ENCODE measurements at regions of chr12 and their contacts with region 1.

Region 1: DNA sequence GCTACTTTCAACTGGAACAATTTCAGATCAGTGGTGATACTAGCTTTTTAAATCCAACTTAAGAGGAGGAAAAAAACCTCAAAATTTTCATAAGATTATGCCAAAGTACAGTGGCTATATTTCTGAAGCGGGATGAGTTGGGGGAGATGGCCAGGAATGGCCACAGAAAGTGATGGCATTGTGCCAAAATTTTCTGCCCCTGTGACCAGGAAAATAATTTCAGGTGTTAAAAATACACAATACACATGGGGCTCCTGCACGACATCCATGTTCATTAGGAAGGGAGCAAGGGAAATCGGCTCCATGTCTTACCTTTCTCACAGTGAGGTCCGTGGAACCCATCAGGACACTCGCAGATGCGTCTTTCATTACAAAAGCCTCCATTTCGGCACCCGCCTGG is 53.7 kb downstream of the WIF1 start:
- DNase-seq: no peak
- ATAC-seq: no peak
- H3K4me3 ChIP-seq: no peak overlapping the region
- H3K27ac ChIP-seq: no peak overlapping the region
- H3K4me1 ChIP-seq: no peaks in the 10 kb centered on the region
- H3K27me3 ChIP-seq: no peaks in the 10 kb centered on the region
- CTCF ChIP-seq: no peak

Region 2: DNA sequence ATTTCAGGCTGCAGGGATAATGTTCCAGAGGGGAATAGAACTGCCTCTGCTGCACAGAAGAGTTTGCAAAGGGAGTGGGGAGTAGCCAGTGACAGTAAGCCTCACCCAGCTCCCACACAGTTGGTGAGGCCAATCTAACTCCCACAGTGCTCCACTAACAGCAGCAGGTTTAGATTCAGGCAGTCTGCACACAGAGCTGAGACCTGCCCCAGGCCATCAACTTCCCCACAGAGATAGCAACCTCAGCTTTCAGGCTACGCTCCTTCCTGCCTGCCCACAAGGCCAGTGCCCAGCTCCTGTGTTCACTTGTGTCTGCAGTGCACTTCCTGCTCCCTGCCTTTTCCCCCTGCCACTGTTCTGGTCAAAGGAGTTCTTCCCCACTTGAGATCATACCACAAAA is 135.4 kb before region 1 on chr12:
- intact Hi-C with region 1: loop called in 1 of 10 experiments (anchors 10 kb)
- DNase-seq: no peak
- ATAC-seq: no peak
- H3K4me3 ChIP-seq: no peak overlapping the region
- H3K27ac ChIP-seq: no peak overlapping the region
- H3K4me1 ChIP-seq: no peaks in the 10 kb centered on the region
- H3K27me3 ChIP-seq: peaks cover 0 to 7% (median 0%) of the 10 kb centered on the region in 7 donors
- CTCF ChIP-seq: no peak